ENCODE measurements at regions of chr9 and their contacts with region 1.

Region 1: DNA sequence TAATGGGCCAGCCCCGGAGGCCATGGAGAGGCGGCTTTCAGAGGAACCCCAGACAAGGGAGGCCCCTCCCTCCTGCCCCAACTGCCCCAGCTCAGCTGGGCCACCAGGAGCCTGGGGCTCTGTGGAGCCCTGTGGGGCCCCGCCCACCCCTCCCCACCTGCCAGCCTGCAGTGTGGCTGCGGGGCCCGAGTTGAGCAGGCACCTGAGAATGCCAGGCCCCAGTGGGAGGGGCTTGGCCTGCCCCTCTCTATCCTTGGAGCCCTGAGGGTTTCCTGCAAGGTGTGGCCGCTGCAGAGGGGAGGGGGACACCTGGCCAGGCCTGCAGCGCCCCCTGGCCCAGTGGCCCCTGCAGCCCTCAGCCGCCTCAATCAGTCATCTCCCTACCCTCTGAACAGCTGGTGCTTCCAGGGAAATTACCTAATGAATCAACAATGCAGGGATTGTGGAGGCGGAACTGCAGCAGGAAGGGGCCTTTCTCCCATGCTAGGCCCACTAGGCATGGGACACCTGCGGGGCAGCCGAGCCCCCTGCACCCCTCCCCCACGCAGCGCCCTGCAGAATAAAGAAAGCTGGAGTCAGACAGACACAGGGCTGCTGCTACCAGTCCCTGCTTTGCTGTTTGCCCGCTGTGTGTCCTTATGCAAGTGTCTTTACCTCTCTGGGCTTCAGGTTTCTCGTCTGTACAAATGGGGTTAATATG is 47.9 kb downstream of the LMX1B start:
- DNase-seq: peak; percentile 41
- ATAC-seq: peak; percentile 58
- H3K4me3 ChIP-seq: no peak overlapping the region
- H3K27ac ChIP-seq: no peak overlapping the region
- H3K4me1 ChIP-seq: peaks cover 10% of the 10 kb centered on the region; the same call in 1 of the 2 replicates
- H3K27me3 ChIP-seq: peaks cover 2 to 31% of the 10 kb centered on the region in 2 experiments; a peak in 4 of 5 replicates
- CTCF ChIP-seq: peak; percentile 51
- EP300 ChIP-seq: no peak
- POLR2A ChIP-seq: no peak
- RAD21 ChIP-seq: no peak

Region 2: DNA sequence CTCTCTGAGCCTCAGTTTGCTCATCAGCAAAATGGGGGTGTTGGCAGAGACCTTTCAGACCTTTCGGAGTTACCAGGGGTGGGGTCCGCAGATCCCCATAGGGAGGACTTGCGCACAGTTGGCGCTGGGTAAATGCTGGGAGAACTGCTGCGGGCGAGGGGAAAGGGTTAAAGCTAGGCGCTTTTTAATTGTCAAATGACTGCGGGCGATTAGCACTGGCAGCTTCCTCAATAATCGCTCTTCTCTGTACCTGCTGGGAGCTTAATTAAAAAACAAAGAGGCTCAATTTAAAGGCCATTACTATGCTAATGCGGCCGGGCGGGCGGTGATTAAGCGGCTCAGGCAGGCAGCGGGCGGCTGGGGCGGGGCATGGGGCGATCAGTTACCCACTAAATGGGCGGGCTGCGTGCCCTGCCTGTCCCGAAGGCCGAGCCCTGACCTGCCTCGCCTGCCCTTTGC is 15.0 kb after region 1 on chr9:
- CTCF ChIA-PET with region 1: no interaction called
- POLR2A ChIA-PET with region 1: no interaction called
- in situ Hi-C with region 1: no loop called
- intact Hi-C with region 1: no loop called
- DNase-seq: no peak
- ATAC-seq: no peak
- H3K4me3 ChIP-seq: no peak overlapping the region
- H3K27ac ChIP-seq: no peak overlapping the region
- H3K4me1 ChIP-seq: no peaks in the 10 kb centered on the region
- H3K27me3 ChIP-seq: peaks cover 11 to 65% of the 10 kb centered on the region in 2 experiments; a peak in 4 of 5 replicates
- CTCF ChIP-seq: no peak
- EP300 ChIP-seq: no peak
- POLR2A ChIP-seq: no peak
- RAD21 ChIP-seq: no peak

Region 3: DNA sequence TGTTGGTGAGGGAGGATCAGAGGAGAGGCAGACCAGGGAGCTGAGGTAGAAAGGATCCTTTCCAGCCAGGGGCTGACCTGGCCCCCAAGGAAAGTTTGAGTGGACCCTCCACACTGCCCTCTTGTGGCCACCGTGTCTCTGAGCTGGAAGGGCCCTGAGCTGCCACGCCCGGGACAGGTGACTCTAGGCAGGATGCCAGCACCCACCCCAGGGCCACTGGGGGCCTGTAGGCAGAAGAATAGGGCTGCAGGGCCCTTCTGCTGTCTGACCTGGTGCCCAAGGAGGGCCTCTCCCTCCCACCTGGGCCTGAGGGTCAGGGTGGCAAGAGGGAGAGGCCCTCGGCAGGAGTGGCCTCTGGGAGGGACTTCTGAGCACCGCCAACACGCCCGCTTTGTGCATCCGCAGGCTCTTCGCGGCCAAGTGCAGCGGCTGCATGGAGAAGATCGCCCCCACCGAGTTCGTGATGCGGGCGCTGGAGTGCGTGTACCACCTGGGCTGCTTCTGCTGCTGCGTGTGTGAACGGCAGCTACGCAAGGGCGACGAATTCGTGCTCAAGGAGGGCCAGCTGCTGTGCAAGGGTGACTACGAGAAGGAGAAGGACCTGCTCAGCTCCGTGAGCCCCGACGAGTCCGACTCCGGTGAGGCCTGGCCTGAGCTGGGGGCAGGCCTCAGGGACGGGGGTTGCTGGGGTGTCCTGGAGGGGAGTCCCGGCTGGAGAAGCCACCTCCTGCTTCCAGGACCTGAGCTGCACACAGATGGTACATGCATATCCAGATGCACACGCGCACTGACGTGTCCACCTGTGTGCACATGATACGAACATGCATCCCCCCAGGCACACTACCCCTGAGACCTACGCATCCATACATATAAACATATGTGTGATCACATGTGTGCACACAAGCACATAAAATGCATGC is 29.0 kb after region 1 on chr9:
- CTCF ChIA-PET with region 1: no interaction called
- POLR2A ChIA-PET with region 1: no interaction called
- in situ Hi-C with region 1: no loop called
- intact Hi-C with region 1: loop called (anchors 1 kb)
- DNase-seq: no peak
- ATAC-seq: peak; percentile 75
- H3K4me3 ChIP-seq: no peak overlapping the region
- H3K27ac ChIP-seq: no peak overlapping the region
- H3K4me1 ChIP-seq: no peaks in the 10 kb centered on the region
- H3K27me3 ChIP-seq: peaks cover 10 to 81% of the 10 kb centered on the region in 2 experiments
- CTCF ChIP-seq: peak; percentile 84
- EP300 ChIP-seq: no peak
- POLR2A ChIP-seq: no peak
- RAD21 ChIP-seq: peak; percentile 42; the same call in 1 of the 2 replicates